Esophagus muscularis mucosa (tissue), 4 donors: ENCODE measurements at regions of chr15 and their contacts with region 1.

Region 1: DNA sequence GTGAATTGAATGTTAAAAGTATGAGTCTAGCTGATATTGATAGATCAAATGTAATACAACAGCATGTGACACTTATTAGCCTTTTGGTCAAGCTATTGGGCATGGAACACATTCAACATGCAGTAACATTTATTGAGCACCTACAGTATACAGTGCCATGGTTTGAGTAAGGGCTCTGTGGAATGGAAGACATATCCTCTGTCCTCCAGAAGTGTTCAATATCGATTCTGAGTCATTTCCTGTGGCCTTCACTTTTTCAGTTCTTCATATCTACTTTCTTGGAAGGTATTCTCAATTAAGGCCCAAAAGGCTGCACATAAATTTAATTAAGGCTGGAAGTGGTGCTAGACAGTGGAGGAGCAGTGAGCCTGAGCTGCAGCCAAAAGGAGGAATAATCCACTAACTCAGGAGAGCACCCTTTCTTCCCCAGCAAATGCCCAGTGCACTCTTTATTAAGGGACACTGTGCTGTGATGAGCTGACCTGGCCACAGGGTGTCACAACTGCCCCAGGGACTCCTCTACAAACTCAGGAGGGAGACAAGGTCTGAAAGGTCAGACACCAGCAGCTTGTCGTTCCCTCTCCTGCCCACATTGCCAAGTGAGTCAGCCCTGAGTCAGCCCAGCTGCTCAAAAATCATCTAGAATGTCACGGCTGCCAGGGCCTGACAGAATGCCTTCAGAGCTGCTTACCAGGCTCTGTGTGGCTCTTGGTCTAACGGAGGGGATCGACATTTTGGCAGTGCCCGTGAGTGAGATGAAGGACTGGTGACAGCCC is 544.8 kb downstream of the AGBL1 start:
- DNase-seq: no peak
- H3K4me3 ChIP-seq: no peak overlapping the region
- H3K27ac ChIP-seq: no peak overlapping the region
- H3K4me1 ChIP-seq: peaks cover 4 to 26% (median 12%) of the 10 kb centered on the region in 4 donors
- H3K27me3 ChIP-seq: no peaks in the 10 kb centered on the region
- CTCF ChIP-seq: peak; percentile 36 to 44 (median 44)
- EP300 ChIP-seq: no peak
- POLR2A ChIP-seq: no peak

Region 2: DNA sequence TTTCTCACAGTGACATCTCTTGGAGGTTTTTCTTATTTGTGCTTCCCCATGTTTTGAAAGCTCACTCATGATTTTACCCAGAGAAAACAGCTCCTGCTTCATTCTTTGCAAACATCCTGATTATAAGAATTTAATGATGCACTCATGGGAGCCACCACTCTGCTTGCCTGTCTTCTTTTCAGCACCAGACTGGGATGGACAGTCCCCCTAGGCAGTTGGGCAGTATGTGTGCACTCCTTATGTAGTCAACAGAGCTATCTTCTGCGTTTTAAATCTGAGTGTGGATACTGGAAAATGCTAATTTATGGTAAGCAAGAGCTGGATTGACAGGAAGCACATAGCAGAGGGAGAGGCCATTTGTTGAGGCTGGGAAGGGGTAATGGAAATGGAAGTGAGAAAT is 268.6 kb before region 1 on chr15:
- intact Hi-C with region 1: no loop called
- DNase-seq: no peak
- H3K4me3 ChIP-seq: no peak overlapping the region
- H3K27ac ChIP-seq: no peak overlapping the region
- H3K4me1 ChIP-seq: no peaks in the 10 kb centered on the region
- H3K27me3 ChIP-seq: no peaks in the 10 kb centered on the region
- CTCF ChIP-seq: no peak
- EP300 ChIP-seq: no peak
- POLR2A ChIP-seq: no peak

Region 3: DNA sequence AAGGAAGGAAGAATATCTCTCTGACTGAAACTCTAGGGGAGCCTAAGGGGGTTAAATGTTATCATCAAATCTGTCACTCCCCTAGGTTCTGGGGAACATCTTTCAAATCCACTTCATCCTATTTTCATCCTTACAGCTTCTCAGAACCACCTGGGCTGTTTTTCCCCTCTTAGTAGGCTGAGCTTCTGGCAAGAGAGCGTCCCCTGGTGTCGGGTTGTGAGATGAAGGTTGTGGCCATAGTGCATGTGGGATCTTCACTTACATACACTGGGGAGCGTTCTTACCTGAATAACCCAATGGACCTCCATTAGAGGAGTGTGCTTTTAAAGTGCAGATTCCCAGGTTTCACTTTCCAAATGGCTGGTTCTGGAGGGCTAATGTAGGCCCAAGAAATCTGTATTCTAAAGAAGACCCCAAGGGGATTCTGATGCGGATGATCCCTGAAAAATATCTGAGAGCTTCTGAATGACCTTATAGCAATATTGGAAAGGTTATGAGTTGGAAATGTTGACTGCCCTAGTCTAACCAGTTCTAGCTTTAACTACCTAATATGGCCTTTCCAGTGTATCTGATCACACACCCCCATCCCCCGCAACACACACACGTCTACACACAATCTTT is 118.9 kb after region 1 on chr15:
- intact Hi-C with region 1: loop called (anchors 10 kb)
- DNase-seq: no peak
- H3K4me3 ChIP-seq: no peak overlapping the region
- H3K27ac ChIP-seq: no peak overlapping the region
- H3K4me1 ChIP-seq: no peaks in the 10 kb centered on the region
- H3K27me3 ChIP-seq: no peaks in the 10 kb centered on the region
- CTCF ChIP-seq: peak in 2 of 3 experiments; percentile 28 to 29
- EP300 ChIP-seq: no peak
- POLR2A ChIP-seq: no peak

Region 4: GRCh38 chr15:86855307-86856291 is 231.2 kb after region 1 on chr15:
- intact Hi-C with region 1: no loop called
- DNase-seq: no peak
- H3K4me3 ChIP-seq: no peak overlapping the region
- H3K27ac ChIP-seq: no peak overlapping the region
- H3K4me1 ChIP-seq: peaks cover 0 to 20% (median 10%) of the 10 kb centered on the region in 4 donors
- H3K27me3 ChIP-seq: no peaks in the 10 kb centered on the region
- CTCF ChIP-seq: no peak
- EP300 ChIP-seq: no peak
- POLR2A ChIP-seq: no peak

Region 5: GRCh38 chr15:86879250-86880229 is 255.1 kb after region 1 on chr15:
- intact Hi-C with region 1: loop called (anchors 10 kb)
- DNase-seq: no peak
- H3K4me3 ChIP-seq: no peak overlapping the region
- H3K27ac ChIP-seq: peak overlapping the region in 3 of 4 donors; percentile 24 to 68 (median 28)
- H3K4me1 ChIP-seq: peaks cover 13 to 38% (median 22%) of the 10 kb centered on the region in 4 donors
- H3K27me3 ChIP-seq: no peaks in the 10 kb centered on the region
- CTCF ChIP-seq: no peak
- EP300 ChIP-seq: no peak
- POLR2A ChIP-seq: no peak

Region 6: DNA sequence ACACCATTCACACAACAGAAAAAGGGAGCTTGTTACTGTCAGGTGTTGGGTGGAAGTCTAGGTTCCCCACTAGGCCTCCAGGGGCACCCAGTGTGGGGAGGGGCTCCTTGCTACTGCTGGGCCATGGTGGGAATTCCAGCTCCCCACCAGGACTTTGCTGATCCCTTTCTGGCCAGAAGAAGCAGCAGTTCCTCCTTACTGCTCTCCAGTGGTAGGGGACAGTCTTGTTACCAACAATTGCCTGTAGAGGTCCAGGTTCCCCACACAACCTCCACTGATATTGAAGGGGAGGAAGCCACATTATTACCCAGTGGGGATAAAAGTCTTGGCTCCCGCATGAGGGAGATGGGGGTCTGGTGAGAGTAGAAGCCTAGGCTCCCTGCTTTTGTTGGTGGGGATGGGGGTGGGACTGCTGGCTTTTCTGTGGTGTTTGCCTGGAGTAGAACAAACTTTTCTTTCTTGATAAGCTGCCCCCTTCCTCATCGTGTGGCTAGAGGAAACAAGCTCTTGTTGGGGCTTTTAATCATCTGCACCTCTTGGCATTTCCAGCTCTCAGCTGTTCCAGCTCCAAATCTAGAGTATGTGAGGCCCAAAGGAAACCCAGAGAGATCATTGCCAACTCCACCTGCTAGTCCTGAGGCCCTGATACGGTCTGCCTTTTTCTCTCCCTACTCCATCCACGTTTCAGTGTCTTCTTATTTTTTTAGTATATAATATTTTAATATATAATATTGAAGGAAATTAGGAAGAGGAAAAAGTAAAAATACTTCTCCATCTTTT is 279.4 kb after region 1 on chr15:
- intact Hi-C with region 1: no loop called
- DNase-seq: no peak
- H3K4me3 ChIP-seq: no peak overlapping the region
- H3K27ac ChIP-seq: no peak overlapping the region
- H3K4me1 ChIP-seq: peaks cover 0 to 15% (median 15%) of the 10 kb centered on the region in 4 donors
- H3K27me3 ChIP-seq: no peaks in the 10 kb centered on the region
- CTCF ChIP-seq: no peak
- EP300 ChIP-seq: no peak
- POLR2A ChIP-seq: no peak

Region 7: DNA sequence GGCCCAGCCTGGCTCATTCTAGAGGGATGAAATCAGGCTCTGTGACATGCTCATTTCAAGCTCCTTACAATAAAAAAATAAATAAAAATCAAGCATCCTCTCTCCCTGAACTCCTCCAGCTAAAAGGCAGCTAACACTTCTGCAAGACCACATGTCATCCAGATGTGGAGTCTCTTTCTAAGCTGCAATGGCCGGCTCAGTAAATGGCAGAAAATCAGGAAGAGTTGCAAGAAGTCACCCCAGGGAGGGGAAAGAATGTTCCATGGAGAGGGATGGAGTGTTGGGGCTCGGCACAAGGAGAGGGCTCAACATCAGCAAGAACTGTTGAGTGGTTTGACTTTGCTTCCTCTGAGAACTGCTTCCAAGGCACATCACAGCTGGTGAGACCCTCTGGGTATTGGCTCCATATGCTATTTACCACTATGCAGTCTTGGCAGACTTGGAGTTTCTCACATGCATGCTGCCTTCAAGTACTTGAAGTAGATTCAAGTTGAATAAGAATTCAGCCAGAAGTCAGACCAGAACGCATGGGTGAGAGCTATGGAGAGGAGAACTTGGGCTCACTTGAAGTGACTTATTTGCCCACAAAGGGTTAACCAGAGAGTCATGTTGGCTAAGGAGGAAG is 943.1 kb after region 1 on chr15:
- intact Hi-C with region 1: no loop called
- DNase-seq: no peak
- H3K4me3 ChIP-seq: no peak overlapping the region
- H3K27ac ChIP-seq: no peak overlapping the region
- H3K4me1 ChIP-seq: no peaks in the 10 kb centered on the region
- H3K27me3 ChIP-seq: no peaks in the 10 kb centered on the region
- CTCF ChIP-seq: no peak
- EP300 ChIP-seq: no peak
- POLR2A ChIP-seq: no peak

Region 8: GRCh38 chr15:88246666-88247446 is 1622.4 kb after region 1 on chr15:
- intact Hi-C with region 1: loop called (anchors 5 kb)
- DNase-seq: no peak
- H3K4me3 ChIP-seq: peak overlapping the region in 1 of 4 donors; percentile 40
- H3K27ac ChIP-seq: no peak overlapping the region
- H3K4me1 ChIP-seq: peaks cover 7 to 23% (median 11%) of the 10 kb centered on the region in 4 donors
- H3K27me3 ChIP-seq: peaks cover 0 to 42% (median 0%) of the 10 kb centered on the region in 4 donors
- CTCF ChIP-seq: peak; percentile 91 to 99 (median 98)
- EP300 ChIP-seq: no peak
- POLR2A ChIP-seq: no peak